ENCODE measurements at regions of chr1 and their contacts with region 1.

Region 1: DNA sequence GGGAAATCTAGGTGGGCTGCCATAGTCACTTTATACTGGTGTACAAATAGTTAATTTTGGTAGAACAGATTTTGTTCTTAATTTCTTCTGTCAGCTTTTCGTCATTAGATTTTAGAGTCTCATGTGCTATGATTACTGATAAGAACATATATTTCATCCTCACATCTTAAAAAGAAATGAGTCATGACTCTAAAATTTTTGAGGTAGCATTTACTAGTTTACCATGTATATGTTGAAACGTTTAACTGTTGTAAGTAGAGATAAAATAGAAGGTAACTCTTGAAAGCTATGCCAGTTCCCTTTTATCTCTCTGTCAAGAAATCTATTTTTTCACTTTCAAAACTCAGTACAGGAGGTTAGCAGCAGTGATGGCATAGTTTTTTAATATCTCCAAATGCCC is 53.4 kb downstream of the KLHL20 start:
- DNase-seq: no peak
- ATAC-seq: no peak
- H3K4me3 ChIP-seq: no peak overlapping the region
- H3K4me3 Mint-ChIP-seq: no peak overlapping the region
- H3K27ac ChIP-seq: no peak overlapping the region
- H3K27ac Mint-ChIP-seq: peak overlapping the region in 1 of 2 donors; percentile 70
- H3K4me1 ChIP-seq: no peaks in the 10 kb centered on the region
- H3K4me1 Mint-ChIP-seq: peaks cover 5 to 23% (median 14%) of the 10 kb centered on the region in 3 donors
- H3K27me3 ChIP-seq: no peaks in the 10 kb centered on the region
- H3K27me3 Mint-ChIP-seq: no peaks in the 10 kb centered on the region

Region 2: GRCh38 chr1:173134029-173134428 is 634.2 kb before region 1 on chr1:
- CTCF ChIA-PET with region 1: no interaction called
- POLR2A ChIA-PET with region 1: no interaction called
- DNase-seq: no peak
- ATAC-seq: no peak
- H3K4me3 ChIP-seq: no peak overlapping the region
- H3K4me3 Mint-ChIP-seq: no peak overlapping the region
- H3K27ac ChIP-seq: no peak overlapping the region
- H3K27ac Mint-ChIP-seq: no peak overlapping the region
- H3K4me1 ChIP-seq: no peaks in the 10 kb centered on the region
- H3K4me1 Mint-ChIP-seq: no peaks in the 10 kb centered on the region
- H3K27me3 ChIP-seq: no peaks in the 10 kb centered on the region
- H3K27me3 Mint-ChIP-seq: no peaks in the 10 kb centered on the region

Region 3: GRCh38 chr1:173648880-173649605 is 119.2 kb before region 1 on chr1:
- CTCF ChIA-PET with region 1: no interaction called
- POLR2A ChIA-PET with region 1: no interaction called
- DNase-seq: no peak
- ATAC-seq: no peak
- H3K4me3 ChIP-seq: no peak overlapping the region
- H3K4me3 Mint-ChIP-seq: no peak overlapping the region
- H3K27ac ChIP-seq: no peak overlapping the region
- H3K27ac Mint-ChIP-seq: no peak overlapping the region
- H3K4me1 ChIP-seq: no peaks in the 10 kb centered on the region
- H3K4me1 Mint-ChIP-seq: no peaks in the 10 kb centered on the region
- H3K27me3 ChIP-seq: no peaks in the 10 kb centered on the region
- H3K27me3 Mint-ChIP-seq: peaks cover 4 to 12% of the 10 kb centered on the region in 2 donors

Region 4: GRCh38 chr1:173714759-173715537 is 53.3 kb before region 1 on chr1 and contains the start of gene KLHL20:
- CTCF ChIA-PET with region 1: no interaction called
- POLR2A ChIA-PET with region 1: interaction called in 1 of 2 experiments, 10 read pairs
- DNase-seq: peak; percentile 73 to 92 (median 85)
- ATAC-seq: peak; percentile 97 to 98 (median 98)
- H3K4me3 ChIP-seq: peak within 1 kb of the TSS; percentile 51 to 89
- H3K4me3 Mint-ChIP-seq: peak within 1 kb of the TSS; percentile 91 to 97 (median 96)
- H3K27ac ChIP-seq: peak within 1 kb of the TSS; percentile 87
- H3K27ac Mint-ChIP-seq: peak within 1 kb of the TSS; percentile 96 to 98
- H3K4me1 ChIP-seq: peaks cover 9 to 14% of the 10 kb centered on the region in 2 experiments
- H3K4me1 Mint-ChIP-seq: peaks cover 26 to 36% (median 33%) of the 10 kb centered on the region in 3 donors
- H3K27me3 ChIP-seq: peaks cover 11% of the 10 kb centered on the region in 2 experiments
- H3K27me3 Mint-ChIP-seq: peaks cover 21 to 22% of the 10 kb centered on the region in 2 donors
- total RNA-seq, gene KLHL20: 28.7 to 34.5 (median 31.2) TPM